ENCODE measurements at regions of chr15 and their contacts with region 1.

Region 1: DNA sequence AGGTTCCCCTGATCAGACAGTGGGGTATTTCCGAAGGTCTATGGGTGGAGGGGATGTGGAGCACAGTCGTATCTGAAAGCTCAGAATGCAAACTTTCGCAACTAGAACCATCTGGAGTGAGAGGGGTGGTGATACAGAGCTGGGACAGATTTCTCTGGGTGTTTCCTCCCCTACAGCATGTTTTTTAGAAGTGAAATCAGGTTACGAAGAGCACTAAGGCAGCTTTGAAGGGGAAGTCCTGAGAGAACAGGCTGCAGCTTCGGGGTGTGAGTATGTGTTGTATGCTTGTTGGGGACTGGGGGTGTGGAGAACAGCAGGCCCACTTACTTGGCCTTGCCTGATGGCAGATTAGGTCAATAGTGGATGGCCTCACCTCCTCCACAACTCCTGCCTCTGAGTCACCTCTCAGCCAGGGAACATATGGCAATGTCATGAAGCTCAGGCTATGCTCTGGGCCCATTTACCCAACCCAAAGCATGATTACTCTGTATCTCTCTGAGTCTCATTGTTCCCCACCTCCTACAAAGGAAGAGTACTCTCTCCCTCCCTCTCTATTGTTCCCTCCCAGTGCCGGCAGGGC is 107.2 kb upstream of the RASGRP1 start:
- DNase-seq: peak; percentile 41
- H3K4me3 Mint-ChIP-seq: peak overlapping the region; percentile 68
- H3K27ac Mint-ChIP-seq: peak overlapping the region; percentile 98
- H3K4me1 Mint-ChIP-seq: peaks cover 66% of the 10 kb centered on the region
- H3K27me3 Mint-ChIP-seq: no peaks in the 10 kb centered on the region

Region 2: DNA sequence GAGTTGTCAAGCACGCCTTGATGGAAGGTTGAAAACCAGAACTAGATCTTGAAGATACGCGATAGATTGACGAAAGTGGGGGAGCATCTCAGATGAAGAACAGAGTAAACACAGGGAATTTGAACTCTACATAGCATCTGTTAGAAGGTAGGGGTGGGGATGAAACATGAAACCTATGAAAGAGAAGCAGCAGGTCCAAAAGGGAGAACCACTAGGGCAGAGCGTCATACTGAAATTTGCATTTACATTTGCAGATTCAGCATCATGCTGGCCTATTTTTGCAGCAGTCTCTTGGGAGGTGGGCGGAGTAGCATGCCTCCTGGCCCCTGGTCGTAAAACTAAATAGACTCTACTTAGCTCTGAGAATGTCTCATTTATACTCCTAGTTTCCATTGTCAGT is 61.0 kb before region 1 on chr15:
- intact Hi-C with region 1: loop called (anchors 1 kb)
- DNase-seq: peak; percentile 38
- H3K4me3 Mint-ChIP-seq: peak overlapping the region; percentile 15
- H3K27ac Mint-ChIP-seq: peak overlapping the region; percentile 96
- H3K4me1 Mint-ChIP-seq: peaks cover 72% of the 10 kb centered on the region
- H3K27me3 Mint-ChIP-seq: no peaks in the 10 kb centered on the region

Region 3: DNA sequence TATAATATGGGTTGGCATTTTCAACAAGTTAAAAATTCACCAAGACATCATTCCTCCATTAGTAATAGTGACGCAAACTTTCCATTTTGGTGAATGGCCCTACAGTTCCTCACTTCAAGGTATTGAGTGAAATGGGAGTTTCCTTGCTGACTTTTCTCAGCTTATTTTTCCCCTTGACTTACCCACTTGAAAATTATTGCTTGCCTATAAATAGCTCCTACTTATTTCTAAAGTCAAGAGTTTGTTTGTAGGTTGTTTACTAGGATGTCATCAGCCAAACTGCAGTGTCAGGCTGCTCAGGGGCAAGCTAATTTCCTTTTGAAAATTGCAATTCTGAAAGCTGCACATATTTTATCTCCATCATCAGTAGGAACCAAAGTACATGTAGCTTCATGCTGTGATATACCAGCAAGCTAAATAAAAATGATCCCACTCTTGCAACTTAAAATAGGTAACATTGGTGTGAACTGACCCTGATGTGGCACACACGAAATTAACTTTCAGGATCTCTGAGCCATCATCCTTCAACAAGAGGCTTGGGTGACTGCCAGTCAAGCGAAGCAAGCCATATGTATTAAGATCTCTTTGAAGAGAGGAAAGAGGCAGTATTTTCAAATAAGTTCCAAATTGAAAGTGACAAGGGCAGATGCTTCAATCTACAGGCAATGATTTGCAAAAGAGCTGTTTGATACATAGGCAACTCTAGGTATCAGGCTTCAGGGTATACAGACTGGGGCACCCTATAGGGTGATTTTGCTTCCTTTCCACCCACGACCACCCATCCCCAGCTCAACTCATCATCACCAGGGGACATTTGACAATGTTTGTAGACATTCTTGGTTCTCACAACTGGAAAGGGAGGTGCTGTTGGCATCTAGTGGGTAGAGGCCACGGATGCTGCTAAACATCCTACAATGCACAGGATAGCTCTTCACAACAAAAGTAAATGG is 40.4 kb before region 1 on chr15:
- intact Hi-C with region 1: loop called (anchors 1 kb)
- DNase-seq: no peak
- H3K4me3 Mint-ChIP-seq: peak overlapping the region; percentile 11
- H3K27ac Mint-ChIP-seq: peak overlapping the region; percentile 85
- H3K4me1 Mint-ChIP-seq: peaks cover 49% of the 10 kb centered on the region
- H3K27me3 Mint-ChIP-seq: no peaks in the 10 kb centered on the region

Region 4: GRCh38 chr15:38642689-38643270 is 29.0 kb before region 1 on chr15:
- intact Hi-C with region 1: loop called (anchors 1 kb)
- DNase-seq: no peak
- H3K4me3 Mint-ChIP-seq: no peak overlapping the region
- H3K27ac Mint-ChIP-seq: no peak overlapping the region
- H3K4me1 Mint-ChIP-seq: peaks cover 46% of the 10 kb centered on the region
- H3K27me3 Mint-ChIP-seq: no peaks in the 10 kb centered on the region

Region 5: DNA sequence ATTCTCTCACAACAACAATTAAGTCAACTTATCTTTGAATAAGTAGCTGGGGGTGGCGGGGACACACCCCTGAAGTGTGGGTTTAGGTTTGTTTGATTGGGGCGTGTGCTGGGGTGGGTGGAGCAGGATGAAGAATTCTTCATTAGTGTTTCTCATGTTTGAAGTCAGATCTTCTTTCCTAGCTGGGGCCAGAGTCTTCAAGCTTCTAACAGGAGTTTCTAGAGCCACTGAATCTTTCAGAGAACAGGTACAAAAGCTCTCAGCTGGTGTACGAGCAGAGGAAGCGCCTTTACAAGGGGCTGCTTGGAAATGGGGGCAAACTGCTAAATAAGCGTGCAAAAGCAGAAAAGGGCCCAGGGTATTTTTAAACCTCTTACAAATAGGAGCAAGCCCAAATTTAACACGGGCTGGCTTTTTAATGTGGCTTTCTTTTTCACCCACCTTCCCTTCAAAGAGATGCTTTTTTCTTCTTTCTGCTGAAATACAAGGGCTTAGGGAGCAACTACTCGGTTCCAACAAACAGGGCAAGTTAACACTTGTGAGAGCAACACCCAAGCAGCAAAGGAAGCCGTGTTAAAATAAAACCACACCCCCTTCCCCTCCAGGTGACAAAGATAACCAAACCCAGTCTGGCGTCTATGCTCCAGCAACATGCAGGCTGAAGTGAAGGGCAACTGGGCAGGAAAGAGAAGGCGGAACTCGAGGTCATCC is 20.3 kb before region 1 on chr15:
- intact Hi-C with region 1: loop called (anchors 1 kb)
- DNase-seq: peak; percentile 56
- H3K4me3 Mint-ChIP-seq: peak overlapping the region; percentile 75
- H3K27ac Mint-ChIP-seq: peak overlapping the region; percentile 96
- H3K4me1 Mint-ChIP-seq: peaks cover 77% of the 10 kb centered on the region
- H3K27me3 Mint-ChIP-seq: no peaks in the 10 kb centered on the region

Region 6: DNA sequence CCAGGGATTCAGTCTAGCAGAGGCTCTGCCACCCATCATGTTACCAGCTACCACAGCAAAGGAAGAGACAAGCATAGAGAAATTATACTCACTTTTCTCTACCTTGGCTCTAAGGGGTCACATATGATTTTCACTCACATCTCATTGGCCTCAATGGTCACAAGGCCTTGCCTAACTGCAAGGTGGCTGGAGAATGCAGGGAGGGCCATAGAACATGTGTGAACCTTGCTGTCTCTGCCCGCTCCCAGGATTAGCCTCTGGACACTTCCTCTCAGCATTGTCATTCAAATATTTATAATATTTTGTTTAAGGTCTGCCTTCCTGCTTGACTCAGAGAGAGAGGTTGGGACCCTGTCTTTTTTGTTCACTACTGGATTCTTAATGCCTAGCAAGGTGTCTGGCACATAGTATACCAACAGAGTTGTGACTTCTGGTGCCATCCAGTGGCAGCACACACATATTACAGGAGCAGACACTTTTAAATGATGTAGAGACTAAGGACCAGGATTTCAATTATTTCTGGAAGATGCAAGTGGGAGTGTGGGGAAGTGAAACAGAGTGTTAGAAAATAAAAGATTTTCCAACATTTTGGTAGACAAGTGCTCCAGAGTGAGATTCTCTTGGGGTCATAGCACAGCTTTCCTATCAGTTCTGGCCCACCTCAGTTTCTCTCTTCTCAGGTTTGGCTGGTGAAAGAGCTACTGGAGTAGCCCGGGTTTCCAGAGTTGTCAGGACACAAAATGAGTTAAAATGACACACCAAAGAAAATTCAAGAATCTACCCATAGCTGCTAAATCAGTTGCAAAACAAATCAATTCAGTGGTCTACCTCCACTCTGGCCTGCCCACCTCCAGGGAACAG is 11.8 kb after region 1 on chr15:
- intact Hi-C with region 1: loop called (anchors 1 kb)
- DNase-seq: peak; percentile 62
- H3K4me3 Mint-ChIP-seq: no peak overlapping the region
- H3K27ac Mint-ChIP-seq: peak overlapping the region; percentile 89
- H3K4me1 Mint-ChIP-seq: peaks cover 66% of the 10 kb centered on the region
- H3K27me3 Mint-ChIP-seq: no peaks in the 10 kb centered on the region

Region 7: GRCh38 chr15:38690689-38691332 is 19.0 kb after region 1 on chr15:
- intact Hi-C with region 1: loop called (anchors 1 kb)
- DNase-seq: peak; percentile 75
- H3K4me3 Mint-ChIP-seq: no peak overlapping the region
- H3K27ac Mint-ChIP-seq: peak overlapping the region; percentile 29
- H3K4me1 Mint-ChIP-seq: peaks cover 77% of the 10 kb centered on the region
- H3K27me3 Mint-ChIP-seq: no peaks in the 10 kb centered on the region